ENCODE measurements at regions of chr2 and their contacts with region 1.

Region 1: DNA sequence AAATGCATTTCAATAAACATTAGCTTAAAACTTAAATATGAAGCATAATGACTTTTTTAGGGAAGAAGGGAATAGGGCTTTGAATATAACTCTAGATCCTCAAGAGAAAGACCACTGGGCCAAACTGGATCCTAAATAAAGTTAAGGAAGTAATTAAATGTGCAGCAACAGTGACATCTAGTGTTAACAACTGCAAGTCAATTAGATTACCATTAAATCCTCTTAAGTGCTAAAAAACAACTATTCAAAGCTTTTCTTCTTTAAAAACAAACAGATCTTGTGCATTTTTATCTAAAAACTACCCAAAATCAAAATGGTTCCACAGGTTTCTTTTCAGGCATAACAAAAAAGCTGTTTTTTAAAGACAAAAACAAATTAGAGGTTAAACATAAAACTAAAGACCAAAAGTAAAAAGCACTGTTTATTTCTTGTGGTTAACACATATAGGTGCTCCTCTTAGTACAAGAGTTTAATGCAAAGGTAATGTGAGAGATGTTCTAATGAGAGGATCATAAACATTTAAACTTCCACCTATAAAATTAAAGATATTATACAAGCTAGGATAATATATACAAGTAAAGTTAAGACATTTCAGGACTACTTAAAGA is 111.4 kb downstream of the THADA start:
- DNase-seq: no peak
- CTCF ChIP-seq: peak; percentile 38

Region 2: GRCh38 chr2:42974721-42975717 is 509.4 kb before region 1 on chr2:
- CTCF ChIA-PET with region 1: interaction called, 14 read pairs
- POLR2A ChIA-PET with region 1: no interaction called
- DNase-seq: peak; percentile 63
- CTCF ChIP-seq: peak; percentile 85

Region 3: DNA sequence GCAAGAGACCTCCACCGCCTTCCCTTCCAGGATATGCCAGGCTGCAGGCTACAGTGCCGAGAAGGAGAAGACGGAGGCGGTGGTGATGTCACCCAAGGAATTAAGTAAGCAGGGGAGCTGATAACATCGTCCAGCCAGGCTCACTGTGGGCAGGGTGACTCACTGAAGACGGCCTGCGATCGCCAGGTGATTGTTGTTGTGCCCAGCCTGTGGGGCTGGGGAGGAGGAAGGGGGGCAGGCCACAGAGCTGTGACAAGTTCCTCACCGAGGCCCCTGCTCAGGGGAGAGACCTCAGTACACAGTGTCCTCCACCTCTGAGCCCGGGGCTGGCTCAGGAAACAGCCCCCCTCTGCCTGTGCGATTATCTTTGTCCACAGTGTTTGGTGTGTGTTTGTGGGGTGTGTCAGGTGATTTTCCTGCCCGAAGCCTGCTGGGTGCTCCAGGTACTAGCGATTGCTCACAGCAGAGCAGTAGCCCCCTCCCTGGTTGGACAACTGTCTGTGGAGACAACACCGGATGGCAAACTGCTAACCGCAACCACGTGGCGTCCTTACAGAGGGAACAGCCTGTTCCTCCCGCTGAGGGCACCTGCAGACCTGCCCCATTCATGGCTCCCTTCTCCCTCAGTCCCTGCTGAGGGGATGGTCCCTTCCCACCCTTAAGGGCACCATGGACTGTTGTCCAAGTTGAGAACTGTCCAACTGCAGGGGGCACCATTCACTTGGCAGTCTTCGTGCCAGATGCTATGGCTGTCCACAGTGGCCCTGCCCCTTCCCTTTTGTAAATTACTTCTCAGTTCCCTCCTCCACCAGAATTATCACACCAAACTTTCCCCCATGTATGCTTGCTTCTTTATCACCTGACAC is 353.2 kb before region 1 on chr2:
- CTCF ChIA-PET with region 1: interaction called, 83 read pairs
- POLR2A ChIA-PET with region 1: no interaction called
- DNase-seq: peak; percentile 78
- CTCF ChIP-seq: peak; percentile 48

Region 4: DNA sequence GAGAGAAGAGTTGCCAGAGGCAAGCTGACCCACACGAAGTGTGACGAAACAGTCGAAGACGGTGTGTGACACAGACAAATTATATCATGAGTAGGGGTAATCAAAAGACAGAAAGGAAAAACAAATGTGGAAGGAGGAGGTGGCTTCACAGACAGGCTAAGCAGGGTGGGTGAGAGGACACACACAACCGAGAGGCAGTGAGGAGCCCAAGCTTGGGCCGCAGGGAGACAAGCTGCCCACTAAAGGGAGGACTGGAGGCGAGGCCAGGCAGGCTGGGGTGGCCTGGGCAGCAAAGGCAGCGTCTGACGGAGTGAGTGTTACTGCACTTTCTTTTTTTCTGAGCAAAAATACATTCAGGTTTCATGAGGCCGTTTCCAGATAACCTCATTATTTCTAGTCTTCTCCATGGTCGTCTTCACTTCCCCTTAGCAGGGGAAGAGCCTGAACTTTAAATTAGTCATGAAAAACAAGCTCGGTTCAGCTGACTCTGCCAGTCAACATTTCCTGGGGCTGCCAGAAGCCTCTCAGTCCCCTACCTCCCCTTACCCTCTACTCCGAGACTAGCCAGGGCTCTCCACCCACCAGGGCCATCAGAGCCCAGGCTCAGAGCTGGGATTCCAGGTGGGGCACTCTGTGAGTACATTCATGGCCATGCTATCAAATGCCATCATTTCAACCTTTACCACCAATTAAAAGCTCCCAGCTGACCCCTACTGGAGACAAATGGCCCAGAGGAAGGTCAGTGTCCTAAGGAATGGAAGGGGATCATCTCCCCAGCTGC is 244.3 kb before region 1 on chr2:
- CTCF ChIA-PET with region 1: interaction called, 16 read pairs
- POLR2A ChIA-PET with region 1: no interaction called
- DNase-seq: peak; percentile 77
- CTCF ChIP-seq: peak; percentile 10

Region 5: GRCh38 chr2:43426305-43427031 is 58.0 kb before region 1 on chr2:
- CTCF ChIA-PET with region 1: interaction called, 13 read pairs
- POLR2A ChIA-PET with region 1: interaction called, 3 read pairs
- DNase-seq: peak; percentile 80
- CTCF ChIP-seq: no peak

Region 6: DNA sequence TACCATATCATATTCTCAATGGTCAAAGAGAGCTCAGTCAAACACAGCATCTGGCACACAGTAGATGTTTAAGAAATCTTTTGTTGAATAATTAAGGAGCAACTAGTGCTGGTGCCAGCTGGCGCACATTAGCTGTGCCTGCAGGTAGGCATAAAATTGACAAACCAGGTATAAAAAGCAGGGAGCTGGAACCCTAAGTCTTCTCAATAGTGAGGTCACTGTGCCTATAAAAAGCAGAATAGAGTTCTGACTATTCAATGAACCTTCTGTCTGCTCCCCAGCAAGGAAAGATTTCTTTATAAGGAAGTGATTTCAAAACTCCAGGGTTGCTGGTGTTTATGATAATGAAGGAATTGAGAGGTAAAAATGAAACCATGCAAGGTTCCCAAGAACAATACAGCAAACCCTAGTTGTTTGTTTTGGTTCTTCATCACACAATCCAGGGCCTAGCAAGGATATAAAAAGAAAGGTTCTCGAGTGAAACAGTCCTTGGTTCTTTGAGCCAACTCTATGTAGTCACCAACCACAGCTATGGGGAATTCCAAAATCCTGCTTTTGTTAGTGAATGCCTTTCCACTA is 35.3 kb after region 1 on chr2:
- CTCF ChIA-PET with region 1: interaction called, 18 read pairs
- POLR2A ChIA-PET with region 1: no interaction called
- DNase-seq: no peak
- CTCF ChIP-seq: no peak

Measured in GM10248 (cell line).